ENCODE measurements at regions of chr3 and their contacts with region 1.

Region 1: GRCh38 chr3:13452490-13453335 is 27.4 kb upstream of the HDAC11 start:
- DNase-seq: peak; percentile 60
- ATAC-seq: peak; percentile 21
- H3K4me3 Mint-ChIP-seq: peak overlapping the region; percentile 80
- H3K27ac Mint-ChIP-seq: peak overlapping the region; percentile 82
- H3K4me1 Mint-ChIP-seq: peaks cover 22% of the 10 kb centered on the region
- H3K27me3 Mint-ChIP-seq: no peaks in the 10 kb centered on the region

Region 2: DNA sequence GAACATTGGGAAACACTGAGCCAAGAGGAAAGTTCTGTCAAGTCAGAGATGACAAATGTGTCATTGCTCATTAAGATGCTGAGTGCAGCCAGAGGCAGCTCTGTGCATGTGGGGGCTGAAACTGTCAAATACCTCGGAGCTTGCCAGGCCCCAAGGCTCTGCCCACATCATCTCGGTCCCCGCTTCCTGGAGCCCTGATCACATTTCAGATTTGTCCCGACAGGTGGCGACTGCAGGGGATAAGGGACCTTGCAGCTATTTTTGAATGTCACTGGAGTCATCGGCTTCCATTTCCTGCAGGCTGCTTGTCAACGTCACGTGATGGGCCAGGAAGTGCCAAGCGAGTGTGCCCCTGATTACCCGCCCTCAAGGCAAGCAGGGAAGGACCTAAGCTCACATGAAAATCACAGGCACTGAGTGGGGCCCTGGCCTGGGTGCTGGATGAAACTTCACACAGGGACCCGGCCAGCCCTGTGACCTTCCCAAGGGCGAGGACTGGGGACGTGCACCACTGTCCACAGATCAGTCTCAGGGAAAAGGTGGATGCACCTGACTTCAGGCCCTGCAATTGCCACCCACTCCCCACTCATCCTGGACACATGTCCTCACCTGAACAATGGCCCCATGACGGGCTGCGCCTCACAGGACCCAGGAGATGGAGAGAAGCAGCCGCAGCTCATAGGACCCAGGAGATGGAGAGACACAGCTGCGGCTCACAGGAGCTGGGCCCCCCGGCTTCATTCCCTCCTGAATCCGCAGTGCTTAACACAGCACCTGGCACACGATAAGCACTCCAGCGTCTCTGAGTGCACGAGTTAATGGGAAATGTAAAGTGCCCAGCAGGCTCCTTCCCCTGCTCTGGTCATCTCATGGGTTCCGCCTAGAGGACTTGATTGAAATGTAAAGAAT is 106.0 kb before region 1 on chr3:
- CTCF ChIA-PET with region 1: interaction called, 54 read pairs
- DNase-seq: peak; percentile 82
- ATAC-seq: peak; percentile 82
- H3K4me3 Mint-ChIP-seq: no peak overlapping the region
- H3K27ac Mint-ChIP-seq: peak overlapping the region; percentile 48
- H3K4me1 Mint-ChIP-seq: peaks cover 55% of the 10 kb centered on the region
- H3K27me3 Mint-ChIP-seq: no peaks in the 10 kb centered on the region

Region 3: DNA sequence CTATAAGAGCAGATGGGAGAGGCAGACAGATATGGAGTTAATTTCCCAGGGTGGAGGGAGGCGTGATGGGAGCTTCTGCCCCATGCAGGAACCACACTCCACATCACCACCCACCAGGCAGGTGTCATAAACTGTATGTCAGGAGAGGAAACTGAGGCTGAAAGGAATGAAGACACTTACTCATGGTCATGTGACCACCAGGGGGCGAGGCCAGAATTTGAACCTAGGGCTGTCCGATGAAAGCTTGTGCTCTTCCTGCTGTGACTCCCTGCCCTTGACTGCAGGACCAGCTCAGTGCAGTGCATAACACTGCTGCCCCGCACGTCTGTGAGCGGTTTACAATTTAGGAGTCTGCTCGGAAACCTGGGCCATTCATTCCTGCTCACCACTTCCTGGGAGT is 61.4 kb before region 1 on chr3:
- CTCF ChIA-PET with region 1: interaction called, 32 read pairs
- DNase-seq: no peak
- ATAC-seq: no peak
- H3K4me3 Mint-ChIP-seq: no peak overlapping the region
- H3K27ac Mint-ChIP-seq: no peak overlapping the region
- H3K4me1 Mint-ChIP-seq: peaks cover 2% of the 10 kb centered on the region
- H3K27me3 Mint-ChIP-seq: no peaks in the 10 kb centered on the region

Region 4: DNA sequence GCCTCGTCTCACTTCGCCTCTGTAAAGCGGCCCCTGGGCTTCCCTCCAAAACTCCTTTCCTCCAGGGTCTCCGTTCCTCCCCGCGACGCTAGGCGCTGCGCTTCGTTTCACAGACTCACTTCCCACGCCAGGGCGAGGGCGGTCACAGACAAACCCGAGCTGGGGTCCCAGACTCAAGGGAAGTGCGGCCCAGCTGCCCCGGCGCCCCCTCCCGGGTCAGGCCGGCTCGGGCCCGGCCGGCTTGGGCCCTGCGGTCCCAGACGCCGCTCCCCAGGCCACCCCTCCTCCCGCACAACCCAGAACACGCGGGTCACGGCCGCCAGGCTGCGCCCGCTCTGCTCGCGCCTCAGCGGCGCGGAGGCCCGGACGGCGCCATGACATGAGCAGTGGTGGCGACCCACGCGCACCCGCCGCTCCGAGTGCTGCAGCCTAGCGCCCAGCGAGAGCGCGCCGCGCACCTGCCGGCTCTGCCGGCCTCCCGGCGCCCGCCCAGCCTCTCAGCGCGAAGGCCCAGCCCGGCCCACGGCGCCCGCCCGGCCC is 33.1 kb before region 1 on chr3:
- CTCF ChIA-PET with region 1: interaction called, 89 read pairs
- DNase-seq: peak; percentile 66
- ATAC-seq: peak; percentile 59
- H3K4me3 Mint-ChIP-seq: peak overlapping the region; percentile 93
- H3K27ac Mint-ChIP-seq: peak overlapping the region; percentile 92
- H3K4me1 Mint-ChIP-seq: peaks cover 56% of the 10 kb centered on the region
- H3K27me3 Mint-ChIP-seq: no peaks in the 10 kb centered on the region

Region 5: GRCh38 chr3:13479581-13480339 is 27.0 kb after region 1 on chr3 and contains the start of gene HDAC11:
- CTCF ChIA-PET with region 1: interaction called, 16 read pairs
- DNase-seq: peak; percentile 99
- ATAC-seq: peak; percentile 96
- H3K4me3 Mint-ChIP-seq: peak within 1 kb of the TSS; percentile 83
- H3K27ac Mint-ChIP-seq: peak within 1 kb of the TSS; percentile 86
- H3K4me1 Mint-ChIP-seq: peaks cover 10% of the 10 kb centered on the region
- H3K27me3 Mint-ChIP-seq: peaks cover 11% of the 10 kb centered on the region
- total RNA-seq, gene HDAC11: 0.70 to 1.2 TPM